Vagina (tissue), 2 donors: ENCODE measurements at regions of chr22 and their contacts with region 1.

Region 1: DNA sequence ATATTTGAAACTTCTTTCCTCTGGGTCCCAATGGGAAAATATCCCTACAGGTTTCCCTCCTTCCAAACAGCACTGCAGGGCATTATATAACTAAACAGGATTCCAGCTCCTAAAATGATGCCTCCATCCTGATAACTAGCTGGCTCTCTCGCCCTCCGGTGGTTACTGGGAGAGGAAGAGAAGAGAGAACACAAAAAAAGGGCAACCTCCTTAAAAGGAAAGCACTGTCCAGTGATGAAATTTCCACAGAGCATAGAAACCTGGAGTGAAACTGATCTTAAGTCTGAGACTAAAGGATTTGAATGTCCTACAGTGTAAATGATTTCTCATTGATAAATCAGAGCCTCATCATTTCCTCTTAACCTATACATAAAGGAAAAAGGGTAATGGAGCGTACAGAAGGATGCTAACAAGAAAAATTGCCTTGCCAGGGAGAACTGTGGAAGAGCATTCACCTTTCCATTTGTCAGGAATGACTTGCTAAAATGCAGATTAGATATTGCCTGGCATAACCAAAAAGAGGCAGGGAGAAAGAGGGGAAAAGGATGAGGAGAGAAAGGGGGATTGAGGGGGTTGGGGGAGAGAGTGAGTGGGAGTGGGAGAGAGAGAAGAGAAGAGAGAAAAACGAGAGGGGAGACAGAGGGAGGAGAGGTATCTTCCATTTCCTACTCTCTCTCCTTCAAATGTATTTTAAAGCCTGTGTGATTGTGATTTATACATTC is 121.3 kb downstream of the APOL5 start:
- DNase-seq: no peak
- H3K4me3 ChIP-seq: peak overlapping the region; percentile 48 to 53
- H3K27ac ChIP-seq: peak overlapping the region; percentile 75
- H3K4me1 ChIP-seq: peaks cover 70% of the 10 kb centered on the region
- H3K27me3 ChIP-seq: no peaks in the 10 kb centered on the region
- CTCF ChIP-seq: peak in 1 of 3 experiments; percentile 7
- POLR2A ChIP-seq: no peak

Region 2: DNA sequence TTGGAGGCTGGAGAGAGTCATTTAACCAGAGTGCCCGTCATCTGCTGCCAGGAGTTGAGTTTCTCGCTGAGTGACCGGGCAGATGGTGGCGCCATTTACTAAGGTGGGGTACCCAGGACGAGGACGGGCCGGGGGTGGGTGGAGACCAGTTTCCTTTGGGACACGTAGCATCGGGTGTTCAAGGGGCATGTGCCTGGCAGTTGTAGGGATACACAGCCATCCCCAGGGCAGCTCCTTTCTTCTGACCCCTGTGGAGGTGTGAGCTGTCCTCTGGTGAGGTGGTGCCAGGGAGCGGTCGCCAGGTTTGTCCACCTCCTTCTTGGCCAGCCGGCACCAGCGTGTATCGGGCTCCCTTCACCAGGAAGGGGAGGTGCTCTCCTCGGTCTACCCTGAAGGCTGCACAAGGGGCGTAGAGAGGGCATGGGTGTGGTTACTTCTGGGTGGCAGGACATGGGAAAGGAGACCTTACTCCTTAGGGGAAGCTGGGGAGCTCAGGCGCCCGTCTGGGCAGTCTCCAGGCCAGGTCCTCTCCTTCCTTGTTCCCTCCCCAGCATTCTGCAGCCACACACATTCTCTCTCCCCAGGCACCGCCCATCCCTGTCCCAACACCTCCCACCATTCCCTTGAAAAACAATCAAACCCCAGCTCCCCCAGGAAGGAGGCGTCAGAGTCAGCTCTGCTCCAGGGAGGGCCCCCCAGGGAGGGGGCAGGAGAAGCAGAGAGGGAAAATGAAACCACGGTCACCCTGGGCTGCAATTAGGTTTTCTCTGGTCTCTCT is 211.6 kb before region 1 on chr22:
- intact Hi-C with region 1: loop called (anchors 5 kb)
- DNase-seq: peak in 1 of 2 donors; percentile 92
- H3K4me3 ChIP-seq: peak overlapping the region; percentile 53 to 60
- H3K27ac ChIP-seq: peak overlapping the region; percentile 88
- H3K4me1 ChIP-seq: peaks cover 39% of the 10 kb centered on the region
- H3K27me3 ChIP-seq: no peaks in the 10 kb centered on the region
- CTCF ChIP-seq: peak in 1 of 3 experiments; percentile 34
- POLR2A ChIP-seq: peak in 1 of 2 donors; percentile 15

Region 3: GRCh38 chr22:35749808-35750207 is 89.2 kb before region 1 on chr22:
- intact Hi-C with region 1: no loop called
- DNase-seq: no peak
- H3K4me3 ChIP-seq: no peak overlapping the region
- H3K27ac ChIP-seq: no peak overlapping the region
- H3K4me1 ChIP-seq: peaks cover 11% of the 10 kb centered on the region
- H3K27me3 ChIP-seq: no peaks in the 10 kb centered on the region
- CTCF ChIP-seq: no peak
- POLR2A ChIP-seq: no peak